Activated naive CD4-positive, alpha-beta T cell treated with anti-CD3 and anti-CD28 coated beads, Interleukin-2, amount 10 ng/mL, durations not matched to agents 7 days and 5 days (primary cell): ENCODE measurements at regions of chr17 and their contacts with region 1.

Region 1: DNA sequence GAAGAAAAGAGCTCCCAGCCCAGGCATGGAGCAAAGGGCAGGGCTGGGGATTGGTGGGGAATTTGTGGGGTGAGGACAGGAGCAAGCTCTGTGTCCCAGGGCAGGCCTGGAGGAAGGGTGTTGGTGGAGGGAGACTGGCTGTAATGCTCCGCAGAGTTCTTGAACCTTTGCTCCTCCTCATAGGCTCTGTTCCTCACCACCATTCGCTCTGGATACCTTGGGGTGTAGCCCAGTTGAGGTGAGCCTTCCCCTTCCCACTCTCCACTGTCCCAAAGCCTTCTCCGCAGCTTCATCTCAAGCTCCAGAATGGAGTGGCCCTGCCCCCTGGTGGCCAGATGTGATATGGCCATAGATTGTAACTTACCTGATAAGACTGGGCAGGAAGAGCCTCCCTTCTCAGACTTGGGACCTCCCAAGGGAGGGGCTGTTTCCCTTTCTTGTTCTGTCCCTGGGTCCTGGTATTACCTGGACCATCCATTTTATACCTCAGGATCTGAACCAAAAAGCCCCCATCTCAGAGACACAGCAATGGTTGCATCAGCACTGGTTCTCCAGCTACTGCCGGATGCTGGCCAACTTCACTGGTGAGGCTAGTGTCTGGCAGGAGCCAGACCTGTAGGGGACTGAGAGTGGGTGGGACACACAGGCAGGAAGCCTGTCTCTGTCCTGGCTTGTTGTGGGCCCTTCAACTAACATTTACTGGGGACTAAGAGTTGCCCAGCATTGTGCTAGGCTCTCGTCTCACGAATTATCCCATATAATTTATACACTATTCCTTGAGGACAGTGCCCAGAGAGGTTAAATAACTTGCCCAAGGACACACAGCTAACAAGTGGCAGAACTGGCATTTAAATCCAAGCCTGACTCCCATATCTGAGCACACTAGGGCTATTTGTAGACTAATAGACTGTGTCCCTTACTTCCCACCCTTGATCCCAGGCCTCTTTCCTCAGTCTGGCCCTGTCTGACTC is 19.1 kb upstream of the STAC2 start:
- DNase-seq: peak; percentile 92
- H3K4me3 Mint-ChIP-seq: no peak overlapping the region
- H3K27ac Mint-ChIP-seq: peak overlapping the region; percentile 46
- H3K4me1 Mint-ChIP-seq: peaks cover 14% of the 10 kb centered on the region
- H3K27me3 Mint-ChIP-seq: peaks cover 17% of the 10 kb centered on the region

Region 2: DNA sequence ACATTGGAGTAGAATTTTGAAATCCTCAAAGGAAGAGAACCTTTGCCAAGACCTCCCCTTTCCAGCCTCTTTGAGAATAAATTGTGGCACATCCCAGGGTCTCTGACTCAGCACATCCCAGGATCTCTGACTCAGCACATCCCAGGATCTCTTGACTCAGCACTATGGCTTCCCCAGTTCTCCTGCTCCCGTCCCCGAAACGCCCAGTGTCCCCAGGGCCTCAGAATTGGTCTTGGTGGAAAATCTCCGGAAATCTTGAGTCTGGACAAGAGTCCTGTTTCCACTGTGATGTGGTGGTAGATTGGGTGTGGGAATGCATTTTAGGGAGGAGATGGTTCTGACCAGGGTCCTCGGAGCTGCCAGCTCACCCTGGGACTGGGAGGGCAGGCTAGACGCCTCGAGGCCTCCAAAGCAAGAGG is 112.7 kb before region 1 on chr17:
- CTCF ChIA-PET with region 1: no interaction called
- DNase-seq: no peak
- H3K4me3 Mint-ChIP-seq: no peak overlapping the region
- H3K27ac Mint-ChIP-seq: no peak overlapping the region
- H3K4me1 Mint-ChIP-seq: no peaks in the 10 kb centered on the region
- H3K27me3 Mint-ChIP-seq: peaks cover 39% of the 10 kb centered on the region

Region 3: DNA sequence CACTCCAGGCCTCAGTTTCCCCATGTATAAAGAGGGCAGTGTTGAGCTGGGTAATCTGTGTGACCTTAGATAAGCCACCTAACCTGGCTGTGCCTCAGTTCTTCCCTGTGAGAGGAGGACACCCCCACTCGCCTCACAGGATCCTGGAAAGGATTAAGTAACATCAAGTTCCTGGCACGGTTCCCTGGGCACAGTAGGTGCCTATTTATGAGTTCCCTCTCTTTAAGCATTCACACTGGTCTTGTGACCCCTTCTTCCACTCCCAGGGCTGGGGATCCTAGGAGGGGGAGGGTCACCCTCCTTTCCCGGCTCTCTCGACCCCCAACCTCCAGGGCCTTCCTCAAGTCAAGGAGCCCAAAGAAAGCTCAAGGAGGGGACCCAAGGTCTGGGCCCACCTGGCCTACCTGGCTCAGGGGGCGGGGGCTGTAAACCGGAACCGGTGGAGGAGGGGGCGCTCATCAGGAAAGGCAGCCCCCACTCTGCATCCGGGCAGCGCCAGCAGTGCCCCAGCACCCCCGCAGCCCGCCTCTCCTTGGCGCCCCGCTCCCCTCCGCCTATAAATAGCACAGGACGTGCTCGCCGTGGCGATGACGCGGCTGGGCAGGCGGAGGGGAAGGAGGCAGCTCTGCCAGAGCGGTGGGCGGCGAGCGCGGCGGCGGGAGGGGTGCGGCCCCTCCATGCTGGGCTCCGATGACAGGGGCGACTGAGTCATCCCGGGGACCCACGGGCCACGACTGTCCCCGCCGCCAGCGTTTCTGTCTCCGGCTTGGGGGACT is 35.4 kb before region 1 on chr17:
- CTCF ChIA-PET with region 1: interaction called, 162 read pairs
- DNase-seq: peak; percentile 80
- H3K4me3 Mint-ChIP-seq: peak overlapping the region; percentile 45
- H3K27ac Mint-ChIP-seq: no peak overlapping the region
- H3K4me1 Mint-ChIP-seq: peaks cover 31% of the 10 kb centered on the region
- H3K27me3 Mint-ChIP-seq: peaks cover 69% of the 10 kb centered on the region

Region 4: GRCh38 chr17:39261286-39261685 is 16.4 kb after region 1 on chr17:
- CTCF ChIA-PET with region 1: interaction called, 10 read pairs
- DNase-seq: peak; percentile 43
- H3K4me3 Mint-ChIP-seq: no peak overlapping the region
- H3K27ac Mint-ChIP-seq: no peak overlapping the region
- H3K4me1 Mint-ChIP-seq: no peaks in the 10 kb centered on the region
- H3K27me3 Mint-ChIP-seq: no peaks in the 10 kb centered on the region

Region 5: GRCh38 chr17:39335704-39336223 is 90.9 kb after region 1 on chr17:
- CTCF ChIA-PET with region 1: no interaction called
- DNase-seq: no peak
- H3K4me3 Mint-ChIP-seq: no peak overlapping the region
- H3K27ac Mint-ChIP-seq: no peak overlapping the region
- H3K4me1 Mint-ChIP-seq: no peaks in the 10 kb centered on the region
- H3K27me3 Mint-ChIP-seq: no peaks in the 10 kb centered on the region

Region 6: GRCh38 chr17:39404542-39405378 is 159.9 kb after region 1 on chr17:
- CTCF ChIA-PET with region 1: no interaction called
- DNase-seq: no peak
- H3K4me3 Mint-ChIP-seq: no peak overlapping the region
- H3K27ac Mint-ChIP-seq: peak overlapping the region; percentile 68
- H3K4me1 Mint-ChIP-seq: peaks cover 33% of the 10 kb centered on the region
- H3K27me3 Mint-ChIP-seq: peaks cover 8% of the 10 kb centered on the region

Region 7: GRCh38 chr17:39716879-39717536 is 472.1 kb after region 1 on chr17:
- CTCF ChIA-PET with region 1: no interaction called
- DNase-seq: no peak
- H3K4me3 Mint-ChIP-seq: no peak overlapping the region
- H3K27ac Mint-ChIP-seq: no peak overlapping the region
- H3K4me1 Mint-ChIP-seq: no peaks in the 10 kb centered on the region
- H3K27me3 Mint-ChIP-seq: peaks cover 40% of the 10 kb centered on the region